ENCODE measurements at regions of chr17 and their contacts with region 1.

Region 1: GRCh38 chr17:78112518-78113226 is 15.9 kb downstream of the TMC6 start:
- DNase-seq: peak; percentile 75
- H3K4me3 ChIP-seq: no peak overlapping the region
- H3K27ac ChIP-seq: no peak overlapping the region
- H3K4me1 ChIP-seq: no peaks in the 10 kb centered on the region
- CTCF ChIP-seq: peak; percentile 100

Region 2: DNA sequence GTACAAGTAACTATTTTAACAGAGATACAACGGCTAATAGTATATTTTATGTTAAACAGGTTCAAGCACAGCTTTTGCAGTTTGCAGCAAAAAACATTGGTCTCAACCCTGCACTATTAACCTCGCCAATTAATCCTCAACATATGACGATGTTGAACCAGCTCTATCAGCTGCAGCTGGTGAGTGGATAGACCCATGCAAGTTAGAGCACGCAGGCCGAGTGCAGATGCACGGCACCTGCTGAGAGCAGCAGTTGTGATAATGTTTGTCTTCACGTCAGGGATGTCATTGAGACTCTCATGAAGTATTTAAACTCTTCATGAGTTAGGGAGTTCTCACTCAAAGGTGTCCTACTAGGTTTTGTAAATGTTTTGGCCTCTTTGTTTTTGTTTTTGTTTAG is 29.7 kb before region 1 on chr17:
- CTCF ChIA-PET with region 1: no interaction called
- POLR2A ChIA-PET with region 1: no interaction called
- intact Hi-C with region 1: loop called (anchors 2 kb)
- DNase-seq: no peak
- H3K4me3 ChIP-seq: no peak overlapping the region
- H3K27ac ChIP-seq: no peak overlapping the region
- H3K4me1 ChIP-seq: no peaks in the 10 kb centered on the region
- CTCF ChIP-seq: no peak

Region 3: GRCh38 chr17:78133971-78134898 is 21.6 kb after region 1 on chr17:
- CTCF ChIA-PET with region 1: interaction called, 4 read pairs
- POLR2A ChIA-PET with region 1: interaction called, 4 read pairs
- intact Hi-C with region 1: loop called (anchors 1 kb)
- DNase-seq: peak; percentile 91
- H3K4me3 ChIP-seq: peak overlapping the region; percentile 81
- H3K27ac ChIP-seq: peak overlapping the region; percentile 91
- H3K4me1 ChIP-seq: peaks cover 54% of the 10 kb centered on the region
- CTCF ChIP-seq: peak; percentile 97

Region 4: DNA sequence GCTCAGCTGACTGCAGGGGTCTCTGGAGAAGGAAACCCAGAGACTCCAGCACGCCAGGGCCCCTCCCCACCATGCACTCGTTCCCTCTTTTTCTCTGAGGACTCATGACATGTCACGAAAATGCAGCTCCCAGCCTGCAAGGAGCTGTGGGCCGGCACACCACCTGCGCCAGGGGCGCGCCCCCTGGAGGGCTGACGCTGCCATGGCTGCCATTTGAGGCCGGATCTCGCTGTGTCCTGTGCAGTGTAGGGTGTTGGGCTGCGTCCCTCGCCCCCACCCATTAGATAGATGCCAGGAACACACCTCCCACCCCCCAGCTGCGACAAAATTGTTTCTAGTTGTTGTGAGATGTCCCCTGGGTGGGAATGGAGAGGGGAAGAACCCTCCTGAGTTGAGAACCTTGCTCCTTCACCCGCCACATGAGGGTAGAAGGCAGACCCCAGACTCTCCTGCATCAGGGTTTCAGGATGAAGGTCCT is 63.9 kb after region 1 on chr17:
- CTCF ChIA-PET with region 1: no interaction called
- POLR2A ChIA-PET with region 1: no interaction called
- intact Hi-C with region 1: loop called (anchors 1 kb)
- DNase-seq: peak; percentile 85
- H3K4me3 ChIP-seq: no peak overlapping the region
- H3K27ac ChIP-seq: no peak overlapping the region
- H3K4me1 ChIP-seq: peaks cover 62% of the 10 kb centered on the region
- CTCF ChIP-seq: peak; percentile 100